Psoas muscle (tissue), 8 donors: ENCODE measurements at regions of chr10 and their contacts with region 1.

Region 1: GRCh38 chr10:58781873-58782488 is 269.3 kb downstream of the BICC1 start:
- DNase-seq: no peak
- ATAC-seq: peak in 3 of 4 donors; percentile 41 to 80 (median 66)
- H3K4me3 ChIP-seq: no peak overlapping the region
- H3K27ac ChIP-seq: peak overlapping the region; percentile 42
- H3K4me1 ChIP-seq: peaks cover 3% of the 10 kb centered on the region
- H3K27me3 ChIP-seq: no peaks in the 10 kb centered on the region
- CTCF ChIP-seq: peak; percentile 63

Region 2: DNA sequence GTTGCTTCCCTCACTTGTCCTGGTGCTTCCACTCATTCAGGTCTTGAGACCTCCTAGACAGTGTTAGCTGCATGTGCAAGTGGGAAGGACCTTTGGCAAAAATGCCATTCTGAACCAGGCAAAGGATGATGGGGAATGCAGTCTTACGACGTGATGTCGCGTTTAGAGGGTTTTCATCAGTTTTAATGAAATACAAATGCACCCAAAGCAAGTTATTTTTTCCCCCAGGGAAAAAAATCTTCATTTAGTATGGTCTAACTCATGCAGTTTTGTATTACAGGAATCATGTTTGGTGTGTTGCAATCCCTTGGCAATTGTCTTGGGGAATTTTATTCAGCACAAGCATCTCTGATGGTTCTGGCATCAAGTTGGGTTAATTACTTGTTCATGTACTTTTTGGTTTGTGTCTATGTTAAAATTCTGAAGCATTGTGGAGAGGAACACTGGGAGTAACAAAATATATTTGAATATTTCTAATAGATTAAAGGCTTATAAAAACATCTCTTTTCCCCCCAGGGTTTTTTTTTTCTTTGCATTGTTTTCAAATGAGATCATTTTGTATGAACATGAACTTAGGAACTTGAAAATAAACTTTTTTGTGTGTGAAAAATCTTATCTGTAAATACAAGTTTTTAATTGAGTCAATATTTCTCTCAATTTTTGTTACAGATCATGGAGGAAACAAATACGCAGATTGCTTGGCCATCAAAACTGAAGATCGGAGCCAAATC is 80.4 kb before region 1 on chr10:
- intact Hi-C with region 1: no loop called
- DNase-seq: no peak
- ATAC-seq: peak; percentile 46 to 69 (median 48)
- H3K4me3 ChIP-seq: no peak overlapping the region
- H3K27ac ChIP-seq: no peak overlapping the region
- H3K4me1 ChIP-seq: no peaks in the 10 kb centered on the region
- H3K27me3 ChIP-seq: no peaks in the 10 kb centered on the region
- CTCF ChIP-seq: no peak

Region 3: DNA sequence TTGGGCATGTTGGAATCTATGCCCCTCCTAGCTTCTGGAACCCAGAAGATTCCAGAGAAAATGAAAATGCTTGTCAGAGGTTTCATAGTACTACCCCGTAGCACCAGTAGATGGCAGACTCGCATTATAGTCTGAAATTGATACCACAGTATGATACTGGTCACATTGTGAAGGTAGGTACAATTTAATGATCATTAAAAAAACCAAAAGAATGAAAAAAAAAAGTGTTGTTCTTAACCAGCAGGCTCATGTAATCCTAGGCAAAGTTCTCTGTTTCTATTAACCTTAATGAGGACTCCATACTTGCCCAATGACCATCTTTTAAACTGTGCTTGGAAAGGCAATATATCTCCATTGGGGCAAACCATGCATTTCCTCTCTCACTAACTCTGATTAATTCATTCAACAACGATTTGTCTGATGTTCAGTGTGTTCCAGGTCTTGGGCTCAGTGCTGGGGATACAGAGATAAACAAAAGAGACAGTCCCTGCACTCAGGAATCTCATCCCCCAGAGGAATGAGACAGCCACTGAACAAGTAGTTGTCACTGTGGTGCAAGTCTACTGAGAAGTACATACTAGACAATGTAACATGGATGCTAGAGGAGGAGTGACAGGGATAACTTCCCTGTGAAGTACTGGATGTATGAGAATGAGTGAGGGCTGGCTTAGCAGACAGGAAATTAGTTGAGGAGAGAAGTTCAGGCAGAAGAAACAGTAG is 170.9 kb after region 1 on chr10:
- intact Hi-C with region 1: loop called in 1 of 2 experiments (anchors 5 kb)
- DNase-seq: no peak
- ATAC-seq: peak; percentile 59 to 79 (median 72)
- H3K4me3 ChIP-seq: no peak overlapping the region
- H3K27ac ChIP-seq: peak overlapping the region; percentile 16
- H3K4me1 ChIP-seq: no peaks in the 10 kb centered on the region
- H3K27me3 ChIP-seq: no peaks in the 10 kb centered on the region
- CTCF ChIP-seq: peak; percentile 83